ENCODE measurements at regions of chr21 and their contacts with region 1.

Region 1: GRCh38 chr21:27346041-27346448 is 379.2 kb upstream of the ADAMTS5 start:
- DNase-seq: no peak
- H3K4me3 ChIP-seq: no peak overlapping the region
- H3K27ac ChIP-seq: no peak overlapping the region
- H3K4me1 ChIP-seq: no peaks in the 10 kb centered on the region
- H3K27me3 ChIP-seq: no peaks in the 10 kb centered on the region
- CTCF ChIP-seq: no peak
- EP300 ChIP-seq: no peak
- POLR2A ChIP-seq: no peak

Region 2: GRCh38 chr21:27244352-27244751 is 101.7 kb before region 1 on chr21:
- intact Hi-C with region 1: no loop called
- DNase-seq: no peak
- H3K4me3 ChIP-seq: no peak overlapping the region
- H3K27ac ChIP-seq: peak overlapping the region in 1 of 4 donors; percentile 36
- H3K4me1 ChIP-seq: no peaks in the 10 kb centered on the region
- H3K27me3 ChIP-seq: no peaks in the 10 kb centered on the region
- CTCF ChIP-seq: no peak
- EP300 ChIP-seq: no peak
- POLR2A ChIP-seq: no peak

Region 3: GRCh38 chr21:27286760-27287159 is 59.3 kb before region 1 on chr21:
- intact Hi-C with region 1: loop called (anchors 10 kb)
- DNase-seq: no peak
- H3K4me3 ChIP-seq: no peak overlapping the region
- H3K27ac ChIP-seq: no peak overlapping the region
- H3K4me1 ChIP-seq: no peaks in the 10 kb centered on the region
- H3K27me3 ChIP-seq: no peaks in the 10 kb centered on the region
- CTCF ChIP-seq: no peak
- EP300 ChIP-seq: no peak
- POLR2A ChIP-seq: no peak